ENCODE measurements at regions of chr1 and their contacts with region 1.

Region 1: GRCh38 chr1:115807723-115808122 is 33.2 kb downstream of the NHLH2 start:
- DNase-seq: peak; percentile 67 to 88
- H3K4me3 ChIP-seq: no peak overlapping the region
- H3K27ac ChIP-seq: no peak overlapping the region
- H3K4me1 ChIP-seq: peaks cover 6 to 37% (median 20%) of the 10 kb centered on the region in 4 donors
- H3K27me3 ChIP-seq: no peaks in the 10 kb centered on the region
- CTCF ChIP-seq: peak in 5 of 7 experiments; percentile 48 to 69 (median 59)
- EP300 ChIP-seq: no peak
- POLR2A ChIP-seq: no peak

Region 2: GRCh38 chr1:115609021-115609420 is 198.7 kb before region 1 on chr1:
- intact Hi-C with region 1: no loop called
- DNase-seq: no peak
- H3K4me3 ChIP-seq: no peak overlapping the region
- H3K27ac ChIP-seq: no peak overlapping the region
- H3K4me1 ChIP-seq: no peaks in the 10 kb centered on the region
- H3K27me3 ChIP-seq: no peaks in the 10 kb centered on the region
- CTCF ChIP-seq: no peak
- EP300 ChIP-seq: no peak
- POLR2A ChIP-seq: no peak

Region 3: GRCh38 chr1:115980998-115981993 is 173.6 kb after region 1 on chr1:
- intact Hi-C with region 1: loop called (anchors 5 kb)
- DNase-seq: peak in 1 of 2 donors; percentile 64
- H3K4me3 ChIP-seq: no peak overlapping the region
- H3K27ac ChIP-seq: no peak overlapping the region
- H3K4me1 ChIP-seq: peaks cover 0 to 24% (median 16%) of the 10 kb centered on the region in 4 donors
- H3K27me3 ChIP-seq: no peaks in the 10 kb centered on the region
- CTCF ChIP-seq: peak in 5 of 7 experiments; percentile 30 to 63 (median 48)
- EP300 ChIP-seq: no peak
- POLR2A ChIP-seq: no peak

Measured in stomach (tissue), 19 donors.